ENCODE measurements at regions of chr10 and their contacts with region 1.

Region 1: GRCh38 chr10:47047671-47048525 is 136.7 kb downstream of the PTPN20 start:
- DNase-seq: peak; percentile 93
- H3K4me3 ChIP-seq: no peak overlapping the region
- H3K27ac ChIP-seq: no peak overlapping the region
- H3K4me1 ChIP-seq: peaks cover 0 to 13% (median 5%) of the 10 kb centered on the region in 6 donors
- H3K27me3 ChIP-seq: no peaks in the 10 kb centered on the region
- CTCF ChIP-seq: peak; percentile 62 to 91 (median 81)
- POLR2A ChIP-seq: no peak

Region 2: GRCh38 chr10:46516660-46517416 is 531.1 kb before region 1 on chr10:
- intact Hi-C with region 1: no loop called
- DNase-seq: peak; percentile 70
- H3K4me3 ChIP-seq: no peak overlapping the region
- H3K27ac ChIP-seq: no peak overlapping the region
- H3K4me1 ChIP-seq: no peaks in the 10 kb centered on the region
- H3K27me3 ChIP-seq: peaks cover 0 to 12% (median 0%) of the 10 kb centered on the region in 7 donors
- CTCF ChIP-seq: no peak
- POLR2A ChIP-seq: no peak

Region 3: DNA sequence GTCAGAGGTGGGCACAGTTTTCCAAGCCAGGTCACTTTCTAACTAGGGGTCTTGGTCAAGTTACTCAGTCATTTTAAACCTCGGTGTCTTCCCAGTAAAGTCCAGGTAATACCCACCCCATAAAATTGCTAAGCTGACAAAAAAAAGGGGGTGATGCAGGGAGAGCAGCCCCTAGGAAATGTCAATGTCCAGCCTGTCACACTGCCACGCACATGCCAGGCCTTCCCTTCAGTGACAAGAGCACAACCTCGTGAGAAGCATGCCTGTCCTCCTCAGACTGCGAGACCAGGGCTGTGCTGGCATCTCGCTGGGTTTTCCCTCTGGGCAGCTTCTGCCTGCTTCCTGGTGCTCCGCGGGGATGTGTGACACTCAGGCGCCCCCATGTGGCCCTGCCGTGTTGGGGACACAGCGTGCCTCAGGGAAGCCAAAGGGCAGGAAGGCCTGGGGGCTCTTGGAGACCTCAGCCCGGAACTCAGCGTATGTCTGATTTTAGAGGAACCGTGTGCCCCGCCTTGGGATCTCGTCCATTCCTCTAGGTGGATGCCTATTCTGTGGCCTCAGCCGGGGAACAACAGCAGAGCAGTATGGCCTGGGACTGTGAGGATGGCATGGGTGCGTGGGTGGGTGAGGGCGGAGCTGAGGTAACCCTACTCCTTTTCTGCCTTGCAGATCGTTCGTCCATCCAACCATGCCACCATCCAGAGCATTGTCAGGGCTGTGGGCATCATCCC is 264.2 kb after region 1 on chr10:
- intact Hi-C with region 1: loop called (anchors 2 kb)
- DNase-seq: peak; percentile 94
- H3K4me3 ChIP-seq: no peak overlapping the region
- H3K27ac ChIP-seq: peak overlapping the region in 1 of 8 donors; percentile 13
- H3K4me1 ChIP-seq: peaks cover 0 to 21% (median 10%) of the 10 kb centered on the region in 6 donors
- H3K27me3 ChIP-seq: peaks cover 0 to 31% (median 0%) of the 10 kb centered on the region in 7 donors
- CTCF ChIP-seq: peak; percentile 51 to 92 (median 86)
- POLR2A ChIP-seq: no peak